Activated T-helper 2 cell treated with anti-CD3 and anti-CD28 coated beads, Interferon-gamma antibody, Interleukin-2, Interleukin-4, amounts not matched to agents 10 μg/mL and 5 μg/mL and 100 μg/mL, durations not matched to agents 14 hours and 24 hours and 36 hours (primary cell): ENCODE measurements at regions of chr14 and their contacts with region 1.

Region 1: DNA sequence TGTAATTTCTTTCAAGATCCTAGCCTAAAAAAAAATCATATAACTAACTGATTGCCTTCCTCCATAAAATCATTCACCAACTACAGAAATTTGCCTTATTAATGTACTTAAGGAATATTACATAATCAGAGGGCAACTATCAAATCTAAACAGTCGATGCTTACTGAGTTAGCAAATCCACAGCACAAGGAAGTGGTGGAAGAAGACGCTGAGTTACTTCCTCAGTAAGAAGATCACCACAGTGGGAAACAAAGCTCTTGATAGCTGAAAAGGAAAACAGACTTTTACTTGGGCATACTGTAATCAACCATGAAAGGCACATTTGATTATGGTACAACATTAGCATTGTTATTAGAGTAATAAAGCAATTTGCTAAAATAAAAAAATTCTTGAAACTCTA is 48.7 kb downstream of the HEATR5A start:
- DNase-seq: no peak
- H3K4me3 Mint-ChIP-seq: peak overlapping the region; percentile 21
- H3K27ac Mint-ChIP-seq: peak overlapping the region; percentile 43
- H3K4me1 Mint-ChIP-seq: peaks cover 11% of the 10 kb centered on the region
- H3K27me3 Mint-ChIP-seq: no peaks in the 10 kb centered on the region

Region 2: GRCh38 chr14:31127690-31128089 is 244.0 kb before region 1 on chr14:
- intact Hi-C with region 1: loop called (anchors 10 kb)
- DNase-seq: peak; percentile 53
- H3K4me3 Mint-ChIP-seq: no peak overlapping the region
- H3K27ac Mint-ChIP-seq: peak overlapping the region; percentile 44
- H3K4me1 Mint-ChIP-seq: peaks cover 35% of the 10 kb centered on the region
- H3K27me3 Mint-ChIP-seq: no peaks in the 10 kb centered on the region